Heart left ventricle (tissue), 16 donors: ENCODE measurements at regions of chr19 and their contacts with region 1.

Region 1: DNA sequence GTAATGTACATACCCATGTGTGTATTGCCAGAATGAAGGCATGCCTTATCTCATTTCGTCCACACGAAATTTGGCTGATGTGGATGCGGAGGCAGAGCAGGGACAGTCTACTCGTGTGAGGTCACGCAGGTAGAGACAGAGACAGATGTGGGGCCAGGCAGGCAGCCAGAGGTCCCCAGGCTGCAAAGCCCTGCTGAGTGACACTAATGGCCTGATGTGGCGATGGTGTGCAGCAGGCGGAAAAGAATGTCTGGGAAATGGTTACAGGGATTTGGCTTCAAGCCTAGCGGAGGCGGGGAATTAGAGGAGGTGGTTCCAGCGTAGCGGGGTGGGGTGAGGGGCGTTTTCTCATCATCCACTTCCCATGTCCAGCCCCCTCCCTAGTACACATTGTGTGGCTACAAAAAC is 4.2 kb upstream of the IZUMO2 start:
- DNase-seq: no peak
- ATAC-seq: no peak
- H3K4me3 ChIP-seq: no peak overlapping the region
- H3K27ac ChIP-seq: no peak overlapping the region
- H3K4me1 ChIP-seq: peaks cover 0 to 4% (median 0%) of the 10 kb centered on the region in 12 donors
- H3K27me3 ChIP-seq: peaks cover 0 to 25% (median 3%) of the 10 kb centered on the region in 9 donors
- CTCF ChIP-seq: no peak
- POLR2A ChIP-seq: no peak

Region 2: GRCh38 chr19:50203281-50204080 is 36.2 kb after region 1 on chr19 and contains the start of gene MYH14:
- intact Hi-C with region 1: no loop called
- DNase-seq: peak; percentile 87 to 94 (median 88)
- ATAC-seq: peak; percentile 91 to 93 (median 92)
- H3K4me3 ChIP-seq: peak within 1 kb of the TSS; percentile 24 to 86 (median 62)
- H3K27ac ChIP-seq: peak within 1 kb of the TSS; percentile 56 to 97 (median 84)
- H3K4me1 ChIP-seq: peaks cover 0 to 40% (median 16%) of the 10 kb centered on the region in 12 donors
- H3K27me3 ChIP-seq: peaks cover 0 to 47% (median 28%) of the 10 kb centered on the region in 9 donors
- CTCF ChIP-seq: peak in 2 of 12 donors; percentile 14 to 28
- POLR2A ChIP-seq: peak; percentile 65 to 72
- total RNA-seq, gene MYH14: 65.7 to 120 (median 90.5) TPM

Region 3: GRCh38 chr19:50242581-50242980 is 75.3 kb after region 1 on chr19:
- intact Hi-C with region 1: loop called in 1 of 10 experiments (anchors 10 kb)
- DNase-seq: no peak
- ATAC-seq: no peak
- H3K4me3 ChIP-seq: no peak overlapping the region
- H3K27ac ChIP-seq: no peak overlapping the region
- H3K4me1 ChIP-seq: peaks cover 0 to 5% (median 0%) of the 10 kb centered on the region in 12 donors
- H3K27me3 ChIP-seq: peaks cover 0 to 3% (median 0%) of the 10 kb centered on the region in 9 donors
- CTCF ChIP-seq: no peak
- POLR2A ChIP-seq: no peak

Region 4: GRCh38 chr19:50820549-50821247 is 653.4 kb after region 1 on chr19:
- intact Hi-C with region 1: no loop called
- DNase-seq: peak in 1 of 5 donors; percentile 65
- ATAC-seq: peak; percentile 37 to 78 (median 39)
- H3K4me3 ChIP-seq: peak overlapping the region in 5 of 12 donors; percentile 12 to 26 (median 19)
- H3K27ac ChIP-seq: no peak overlapping the region
- H3K4me1 ChIP-seq: peaks cover 0 to 16% (median 0%) of the 10 kb centered on the region in 12 donors
- H3K27me3 ChIP-seq: peaks cover 26 to 78% (median 45%) of the 10 kb centered on the region in 9 donors
- CTCF ChIP-seq: no peak
- POLR2A ChIP-seq: no peak